HEK293 (cell line): ENCODE measurements at regions of chr20 and their contacts with region 1.

Region 1: GRCh38 chr20:38883081-38883980 is 42.9 kb upstream of the FAM83D start:
- H3K4me3 ChIP-seq: no peak overlapping the region
- H3K27ac ChIP-seq: no peak overlapping the region
- H3K4me1 ChIP-seq: no peaks in the 10 kb centered on the region
- CTCF ChIP-seq: no peak

Region 2: GRCh38 chr20:38779247-38780097 is 103.9 kb before region 1 on chr20:
- CTCF ChIA-PET with region 1: interaction called, 10 read pairs
- POLR2A ChIA-PET with region 1: no interaction called
- H3K4me3 ChIP-seq: no peak overlapping the region
- H3K27ac ChIP-seq: no peak overlapping the region
- H3K4me1 ChIP-seq: no peaks in the 10 kb centered on the region
- CTCF ChIP-seq: no peak

Region 3: GRCh38 chr20:38853759-38854158 is 29.6 kb before region 1 on chr20:
- CTCF ChIA-PET with region 1: no interaction called
- POLR2A ChIA-PET with region 1: no interaction called
- H3K4me3 ChIP-seq: no peak overlapping the region
- H3K27ac ChIP-seq: no peak overlapping the region
- H3K4me1 ChIP-seq: no peaks in the 10 kb centered on the region
- CTCF ChIP-seq: no peak

Region 4: GRCh38 chr20:38962044-38962927 is 79.0 kb after region 1 on chr20 and contains the start of gene DHX35:
- CTCF ChIA-PET with region 1: no interaction called
- POLR2A ChIA-PET with region 1: no interaction called
- H3K4me3 ChIP-seq: peak within 1 kb of the TSS; percentile 99
- H3K27ac ChIP-seq: peak within 1 kb of the TSS; percentile 71
- H3K4me1 ChIP-seq: peaks cover 4% of the 10 kb centered on the region; the same call in 1 of the 2 replicates
- CTCF ChIP-seq: peak; percentile 82

Region 5: DNA sequence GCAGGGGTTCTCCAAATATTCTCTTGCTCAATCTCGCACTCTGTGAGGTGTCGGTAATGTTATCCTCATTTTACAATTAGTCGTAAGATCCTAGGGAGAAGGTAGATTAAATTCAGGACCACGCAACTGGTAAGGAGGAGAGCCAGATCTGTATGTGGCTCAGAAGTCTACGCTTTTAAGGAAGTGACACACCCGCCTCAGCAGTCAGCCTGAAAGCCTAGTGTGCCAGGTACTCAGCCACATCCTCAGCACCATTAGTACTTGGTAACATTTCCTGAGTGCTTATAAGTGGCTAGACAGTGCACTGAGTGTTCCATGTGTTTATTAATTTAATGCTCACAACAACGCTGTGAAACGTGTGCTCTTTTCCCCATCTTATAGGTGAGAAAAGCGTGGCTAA is 142.6 kb after region 1 on chr20:
- CTCF ChIA-PET with region 1: no interaction called
- POLR2A ChIA-PET with region 1: no interaction called
- H3K4me3 ChIP-seq: no peak overlapping the region
- H3K27ac ChIP-seq: no peak overlapping the region
- H3K4me1 ChIP-seq: no peaks in the 10 kb centered on the region
- CTCF ChIP-seq: no peak